ENCODE measurements at regions of chr1 and their contacts with region 1.

Region 1: GRCh38 chr1:179025125-179025974 is at the start of gene FAM20B:
- DNase-seq: peak; percentile 91
- H3K4me3 Mint-ChIP-seq: peak within 1 kb of the TSS; percentile 85
- H3K27ac Mint-ChIP-seq: peak within 1 kb of the TSS; percentile 78
- H3K4me1 Mint-ChIP-seq: peaks cover 34% of the 10 kb centered on the region
- H3K27me3 Mint-ChIP-seq: no peaks in the 10 kb centered on the region
- total RNA-seq, gene FAM20B: 35.1 to 36.1 TPM

Region 2: GRCh38 chr1:178725603-178726517 is 299.5 kb before region 1 on chr1:
- CTCF ChIA-PET with region 1: interaction called, 3 read pairs
- intact Hi-C with region 1: loop called (anchors 1 kb)
- DNase-seq: peak; percentile 80
- H3K4me3 Mint-ChIP-seq: peak overlapping the region; percentile 73
- H3K27ac Mint-ChIP-seq: no peak overlapping the region
- H3K4me1 Mint-ChIP-seq: peaks cover 24% of the 10 kb centered on the region
- H3K27me3 Mint-ChIP-seq: no peaks in the 10 kb centered on the region

Region 3: GRCh38 chr1:179129702-179130473 is 104.5 kb after region 1 on chr1:
- CTCF ChIA-PET with region 1: no interaction called
- intact Hi-C with region 1: loop called (anchors 2 kb)
- DNase-seq: peak; percentile 24
- H3K4me3 Mint-ChIP-seq: peak overlapping the region; percentile 60
- H3K27ac Mint-ChIP-seq: peak overlapping the region; percentile 87
- H3K4me1 Mint-ChIP-seq: peaks cover 37% of the 10 kb centered on the region
- H3K27me3 Mint-ChIP-seq: no peaks in the 10 kb centered on the region

Region 4: GRCh38 chr1:179954493-179955297 is 929.3 kb after region 1 on chr1 and contains the start of gene CEP350:
- CTCF ChIA-PET with region 1: no interaction called
- intact Hi-C with region 1: loop called (anchors 1 kb)
- DNase-seq: peak; percentile 99
- H3K4me3 Mint-ChIP-seq: peak within 1 kb of the TSS; percentile 85
- H3K27ac Mint-ChIP-seq: peak within 1 kb of the TSS; percentile 95
- H3K4me1 Mint-ChIP-seq: peaks cover 41% of the 10 kb centered on the region
- H3K27me3 Mint-ChIP-seq: no peaks in the 10 kb centered on the region
- total RNA-seq, gene CEP350: 30.3 to 36.0 TPM